ENCODE measurements at regions of chr21 and their contacts with region 1.

Region 1: DNA sequence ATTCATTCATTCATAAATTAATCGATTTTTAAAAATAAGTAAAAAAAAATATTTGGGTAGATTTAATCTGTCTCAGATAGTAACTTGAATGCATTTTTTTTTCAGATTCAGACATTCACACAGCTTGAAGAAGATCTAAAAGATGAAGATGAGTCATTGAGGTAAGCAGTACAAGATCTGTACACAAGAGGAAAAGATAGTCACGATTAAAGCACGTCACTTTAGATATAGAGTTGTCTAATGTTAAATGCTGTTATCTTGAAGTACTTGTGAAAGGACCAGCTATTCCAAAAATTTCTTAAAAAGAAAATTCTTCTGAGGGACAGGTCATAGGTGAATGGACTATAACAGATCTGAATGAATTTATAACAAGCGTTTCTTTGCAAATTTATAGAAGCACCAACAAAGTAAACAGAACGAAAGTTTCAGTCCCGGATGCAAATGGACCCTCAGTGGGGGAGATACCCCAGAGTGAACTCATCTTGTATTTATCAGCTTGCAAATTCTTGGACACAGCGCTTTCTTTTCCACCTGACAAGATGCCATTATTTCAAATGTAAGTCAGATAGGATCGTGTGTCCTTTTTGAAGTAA is 31.2 kb upstream of the MORC3 start:
- DNase-seq: peak in 3 of 14 experiments; percentile 66 to 77 (median 73)
- ATAC-seq: peak; percentile 79
- H3K4me3 ChIP-seq: peak overlapping the region; percentile 27
- H3K4me3 Mint-ChIP-seq: peak overlapping the region; percentile 78
- H3K27ac ChIP-seq: peak overlapping the region; percentile 76 to 86
- H3K27ac Mint-ChIP-seq: peak overlapping the region; percentile 96
- H3K4me1 ChIP-seq: peaks cover 20% of the 10 kb centered on the region
- H3K4me1 Mint-ChIP-seq: peaks cover 35% of the 10 kb centered on the region
- H3K27me3 ChIP-seq: no peaks in the 10 kb centered on the region
- H3K27me3 Mint-ChIP-seq: no peaks in the 10 kb centered on the region
- CTCF ChIP-seq: no peak

Region 2: DNA sequence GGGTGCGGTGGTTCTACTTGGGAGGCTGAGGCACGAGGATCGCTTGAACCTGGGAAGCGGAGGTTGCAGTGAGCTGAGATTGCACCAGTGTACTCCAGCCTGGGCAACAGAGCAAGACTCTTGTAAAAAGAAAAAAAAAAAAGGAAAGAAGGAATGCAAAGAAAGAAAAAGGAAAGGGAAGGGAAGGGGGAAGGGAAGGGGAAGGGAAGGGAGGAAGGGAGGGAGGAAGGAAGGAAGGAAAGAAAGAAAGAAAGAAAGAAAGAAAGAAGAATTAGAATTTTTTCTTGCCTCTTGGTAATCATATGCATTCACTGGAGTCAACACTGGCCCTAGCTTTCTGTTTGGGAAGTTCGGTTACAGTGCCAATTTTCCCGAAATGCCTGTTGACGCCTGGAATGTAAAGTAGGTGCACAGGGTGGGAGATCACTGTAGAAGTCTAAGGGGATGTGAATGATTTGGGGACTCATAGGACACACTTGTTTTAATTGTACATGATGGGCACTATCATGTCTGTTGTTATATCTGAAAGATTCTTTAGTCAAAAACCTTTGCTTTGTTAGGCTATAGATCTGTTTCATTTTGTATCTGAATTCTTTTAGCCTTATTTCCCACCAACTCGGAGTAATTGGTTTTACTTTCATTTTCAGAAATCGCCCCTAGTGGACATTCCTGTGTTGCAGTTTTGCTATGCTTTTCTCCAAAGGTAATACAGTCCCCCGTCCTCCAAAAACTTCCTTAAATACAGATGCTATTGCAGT is 28.5 kb before region 1 on chr21:
- CTCF ChIA-PET with region 1: interaction called, 3 read pairs
- POLR2A ChIA-PET with region 1: interaction called, 4 read pairs
- intact Hi-C with region 1: loop called (anchors 2 kb)
- DNase-seq: peak in 12 of 14 experiments; percentile 13 to 81 (median 40)
- ATAC-seq: peak; percentile 93
- H3K4me3 ChIP-seq: peak overlapping the region; percentile 50
- H3K4me3 Mint-ChIP-seq: peak overlapping the region; percentile 89
- H3K27ac ChIP-seq: peak overlapping the region in 1 of 2 donors; percentile 27
- H3K27ac Mint-ChIP-seq: peak overlapping the region; percentile 93
- H3K4me1 ChIP-seq: peaks cover 9% of the 10 kb centered on the region
- H3K4me1 Mint-ChIP-seq: peaks cover 9% of the 10 kb centered on the region
- H3K27me3 ChIP-seq: no peaks in the 10 kb centered on the region
- H3K27me3 Mint-ChIP-seq: no peaks in the 10 kb centered on the region
- CTCF ChIP-seq: peak; percentile 75

Region 3: GRCh38 chr21:36359185-36359584 is 70.4 kb after region 1 on chr21:
- CTCF ChIA-PET with region 1: no interaction called
- POLR2A ChIA-PET with region 1: no interaction called
- intact Hi-C with region 1: no loop called
- DNase-seq: no peak
- ATAC-seq: no peak
- H3K4me3 ChIP-seq: no peak overlapping the region
- H3K4me3 Mint-ChIP-seq: no peak overlapping the region
- H3K27ac ChIP-seq: no peak overlapping the region
- H3K27ac Mint-ChIP-seq: no peak overlapping the region
- H3K4me1 ChIP-seq: no peaks in the 10 kb centered on the region
- H3K4me1 Mint-ChIP-seq: peaks cover 13% of the 10 kb centered on the region
- H3K27me3 ChIP-seq: no peaks in the 10 kb centered on the region
- H3K27me3 Mint-ChIP-seq: no peaks in the 10 kb centered on the region
- CTCF ChIP-seq: no peak

Measured in CD4-positive, alpha-beta T cell (primary cell).